ENCODE measurements at regions of chr2 and their contacts with region 1.

Region 1: DNA sequence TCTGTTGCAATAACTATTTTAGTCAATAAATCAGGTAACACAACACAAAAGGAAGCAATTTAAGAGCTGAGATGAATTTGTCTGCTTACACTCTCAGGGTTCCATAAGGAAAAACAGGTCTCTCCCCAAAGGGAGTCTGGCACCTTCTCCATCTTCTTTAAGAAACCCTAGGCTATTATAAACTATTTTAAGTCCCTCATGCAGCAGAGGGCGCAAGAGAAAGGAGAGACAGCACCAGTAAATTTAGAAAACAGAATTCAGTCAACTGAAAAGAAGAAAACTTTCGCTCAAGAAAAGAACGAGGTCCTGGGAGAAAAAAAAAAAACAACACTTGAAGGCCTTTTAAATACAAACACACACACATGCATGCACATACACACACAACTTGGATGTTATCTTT is 19.1 kb downstream of the SULT1C4 start:
- DNase-seq: peak; percentile 76
- H3K4me3 Mint-ChIP-seq: no peak overlapping the region
- H3K27ac Mint-ChIP-seq: no peak overlapping the region
- H3K4me1 Mint-ChIP-seq: peaks cover 7% of the 10 kb centered on the region
- H3K27me3 Mint-ChIP-seq: no peaks in the 10 kb centered on the region
- CTCF ChIP-seq: peak; percentile 32

Region 2: DNA sequence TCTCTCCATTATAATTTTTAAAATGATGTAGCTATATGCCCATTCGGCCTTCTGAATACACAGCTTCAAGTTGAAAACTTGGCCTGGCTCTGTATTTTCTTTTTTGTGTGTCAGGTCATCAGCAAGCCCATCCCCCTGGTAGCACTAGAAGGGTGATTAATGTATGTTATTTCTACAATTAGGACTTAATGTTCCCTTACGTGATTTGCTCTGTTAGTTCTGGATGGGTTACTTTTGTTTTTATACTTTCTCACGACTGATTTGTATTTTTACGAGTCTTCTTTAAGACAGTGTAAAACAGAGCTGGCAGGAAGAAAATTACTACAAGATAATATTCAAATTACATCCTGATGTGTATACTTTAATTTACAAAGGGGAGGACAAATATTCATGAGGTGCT is 658.6 kb before region 1 on chr2:
- CTCF ChIA-PET with region 1: no interaction called
- POLR2A ChIA-PET with region 1: no interaction called
- intact Hi-C with region 1: no loop called
- DNase-seq: no peak
- H3K4me3 Mint-ChIP-seq: no peak overlapping the region
- H3K27ac Mint-ChIP-seq: peak overlapping the region; percentile 40
- H3K4me1 Mint-ChIP-seq: peaks cover 21% of the 10 kb centered on the region
- H3K27me3 Mint-ChIP-seq: no peaks in the 10 kb centered on the region
- CTCF ChIP-seq: no peak

Region 3: DNA sequence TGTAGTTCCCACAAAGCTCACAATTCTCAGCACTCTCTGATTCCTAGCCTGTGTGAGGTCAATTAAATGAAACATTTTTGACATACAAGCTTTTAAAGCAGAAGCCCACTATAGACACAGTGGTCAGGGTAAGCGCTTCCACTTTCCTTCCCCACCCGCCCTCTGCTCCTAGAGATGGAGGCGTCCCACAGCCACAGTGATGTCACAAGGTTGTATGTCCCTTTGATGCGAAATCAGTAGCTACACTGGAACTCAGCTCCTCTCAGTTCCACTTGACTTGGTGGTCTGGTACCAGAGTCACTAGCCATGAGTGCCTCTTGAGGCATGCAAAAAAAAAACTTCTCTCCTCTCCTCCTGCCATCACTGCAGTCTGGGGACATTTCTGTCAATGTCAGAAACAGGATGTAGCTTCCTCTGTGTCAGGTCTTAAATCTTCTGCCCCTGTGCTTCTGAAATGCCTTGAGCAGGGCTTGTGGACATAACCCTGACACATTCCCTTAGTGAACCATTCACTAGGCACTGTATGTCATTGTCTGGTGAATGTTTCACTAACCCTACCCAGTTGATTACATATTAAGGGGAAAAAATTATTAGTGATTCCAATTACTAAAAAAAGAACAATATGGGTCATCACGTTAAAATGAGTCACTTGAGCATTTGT is 11.3 kb before region 1 on chr2:
- CTCF ChIA-PET with region 1: interaction called, 19 read pairs
- POLR2A ChIA-PET with region 1: interaction called, 3 read pairs
- intact Hi-C with region 1: no loop called
- DNase-seq: no peak
- H3K4me3 Mint-ChIP-seq: no peak overlapping the region
- H3K27ac Mint-ChIP-seq: no peak overlapping the region
- H3K4me1 Mint-ChIP-seq: no peaks in the 10 kb centered on the region
- H3K27me3 Mint-ChIP-seq: no peaks in the 10 kb centered on the region
- CTCF ChIP-seq: no peak

Region 4: GRCh38 chr2:108492364-108492763 is 95.5 kb after region 1 on chr2:
- CTCF ChIA-PET with region 1: interaction called, 7 read pairs
- POLR2A ChIA-PET with region 1: no interaction called
- intact Hi-C with region 1: loop called (anchors 2 kb)
- DNase-seq: peak; percentile 90
- H3K4me3 Mint-ChIP-seq: peak overlapping the region; percentile 6
- H3K27ac Mint-ChIP-seq: no peak overlapping the region
- H3K4me1 Mint-ChIP-seq: peaks cover 11% of the 10 kb centered on the region
- H3K27me3 Mint-ChIP-seq: no peaks in the 10 kb centered on the region
- CTCF ChIP-seq: no peak